H1 (cell line): ENCODE measurements at regions of chr10 and their contacts with region 1.

Region 1: GRCh38 chr10:69451209-69451783 is at the start of gene TSPAN15:
- DNase-seq: peak; percentile 88 to 91
- H3K4me3 ChIP-seq: peak within 1 kb of the TSS; percentile 56 to 91 (median 62)
- H3K27ac ChIP-seq: no peak within 1 kb of the TSS
- H3K4me1 ChIP-seq: peaks cover 0 to 10% (median 4%) of the 10 kb centered on the region in 4 experiments; a peak in 5 of 7 replicates
- H3K27me3 ChIP-seq: peaks cover 8 to 26% (median 16%) of the 10 kb centered on the region in 4 experiments
- CTCF ChIP-seq: no peak
- EP300 ChIP-seq: no peak
- POLR2A ChIP-seq: no peak
- RAD21 ChIP-seq: no peak
- total RNA-seq, gene TSPAN15: 9.7 and 11.6 TPM in 2 replicates

Region 2: DNA sequence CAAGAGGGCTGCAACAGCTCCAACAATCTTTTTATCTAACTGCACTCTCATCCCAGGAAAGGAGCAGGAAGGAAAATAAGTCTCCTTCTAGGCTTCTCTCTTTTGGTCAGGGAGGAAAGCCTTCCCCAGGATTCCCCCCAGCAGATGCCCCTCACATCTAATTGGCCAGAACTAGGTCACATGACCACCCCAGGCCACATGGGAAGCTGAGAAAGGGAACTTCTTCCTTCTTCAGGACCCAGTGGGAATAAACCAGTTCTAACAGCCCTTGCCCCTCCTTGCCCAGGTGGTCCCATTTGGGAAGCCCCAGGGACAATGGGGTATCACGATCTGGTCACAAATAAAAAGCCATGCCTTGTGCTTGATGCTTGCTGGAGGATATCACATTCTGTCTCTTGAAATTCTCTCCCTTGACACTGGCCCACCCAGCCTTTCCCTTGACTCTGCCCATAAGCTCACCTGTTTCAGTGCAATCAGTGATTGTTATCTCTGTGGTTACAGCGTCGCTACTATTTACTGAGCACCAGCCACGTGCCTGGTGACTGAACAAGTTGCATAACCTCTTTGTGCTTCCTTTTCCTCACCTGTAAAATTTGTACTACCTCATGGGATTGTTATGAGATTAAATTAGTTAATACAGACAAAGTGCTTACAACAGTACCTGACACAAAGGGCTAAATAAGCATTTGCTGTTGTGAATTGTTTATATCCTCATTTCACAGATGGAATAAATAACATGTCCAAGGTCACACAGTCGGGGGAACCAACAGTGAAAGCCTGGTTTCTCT is 25.6 kb before region 1 on chr10:
- CTCF ChIA-PET with region 1: interaction called, 150 read pairs
- POLR2A ChIA-PET with region 1: interaction called, 3 read pairs
- DNase-seq: no peak
- H3K4me3 ChIP-seq: no peak overlapping the region
- H3K27ac ChIP-seq: no peak overlapping the region
- H3K4me1 ChIP-seq: no peaks in the 10 kb centered on the region
- H3K27me3 ChIP-seq: no peaks in the 10 kb centered on the region
- CTCF ChIP-seq: no peak
- EP300 ChIP-seq: no peak
- POLR2A ChIP-seq: no peak
- RAD21 ChIP-seq: no peak

Region 3: GRCh38 chr10:69439813-69440506 is 11.3 kb before region 1 on chr10:
- CTCF ChIA-PET with region 1: interaction called, 150 read pairs
- POLR2A ChIA-PET with region 1: no interaction called
- DNase-seq: no peak
- H3K4me3 ChIP-seq: no peak overlapping the region
- H3K27ac ChIP-seq: no peak overlapping the region
- H3K4me1 ChIP-seq: no peaks in the 10 kb centered on the region
- H3K27me3 ChIP-seq: no peaks in the 10 kb centered on the region
- CTCF ChIP-seq: no peak
- EP300 ChIP-seq: no peak
- POLR2A ChIP-seq: no peak
- RAD21 ChIP-seq: no peak

Region 4: DNA sequence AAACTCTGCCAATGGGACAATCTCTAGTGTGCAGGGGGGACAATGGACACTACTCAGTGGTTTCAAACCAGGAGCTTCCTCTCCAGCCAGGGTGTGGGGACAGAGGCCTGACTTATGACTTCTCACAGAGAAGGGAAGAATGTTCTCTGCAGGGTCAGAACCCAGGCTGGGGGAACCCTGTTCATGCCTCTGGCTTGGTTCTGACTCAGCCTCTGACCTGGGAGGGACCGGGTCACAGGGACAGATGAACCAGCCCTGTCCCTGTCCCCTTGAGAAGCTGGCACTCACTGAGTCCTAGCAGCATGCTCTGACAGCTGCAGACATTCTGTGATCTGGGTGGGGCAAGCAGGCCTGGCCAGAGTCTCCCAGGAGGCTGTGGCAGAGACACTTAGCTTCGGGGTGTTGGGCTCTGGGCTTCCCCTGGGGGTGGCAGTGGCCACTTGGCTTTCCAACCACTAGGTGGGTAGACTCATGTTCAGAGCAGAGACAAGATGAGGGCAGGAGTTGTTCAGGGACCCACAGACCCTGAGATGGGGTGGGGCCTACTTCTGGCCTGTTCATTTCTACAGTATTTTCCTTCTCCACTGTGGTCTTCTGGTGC is 13.6 kb after region 1 on chr10:
- CTCF ChIA-PET with region 1: interaction called, 92 read pairs
- POLR2A ChIA-PET with region 1: interaction called, 3 read pairs
- DNase-seq: no peak
- H3K4me3 ChIP-seq: no peak overlapping the region
- H3K27ac ChIP-seq: no peak overlapping the region
- H3K4me1 ChIP-seq: peaks cover 0 to 5% (median 0%) of the 10 kb centered on the region in 4 experiments; a peak in 3 of 7 replicates
- H3K27me3 ChIP-seq: no peaks in the 10 kb centered on the region
- CTCF ChIP-seq: peak in 1 of 3 experiments; percentile 5; a peak in 1 of 4 replicates
- EP300 ChIP-seq: no peak
- POLR2A ChIP-seq: no peak
- RAD21 ChIP-seq: no peak

Region 5: DNA sequence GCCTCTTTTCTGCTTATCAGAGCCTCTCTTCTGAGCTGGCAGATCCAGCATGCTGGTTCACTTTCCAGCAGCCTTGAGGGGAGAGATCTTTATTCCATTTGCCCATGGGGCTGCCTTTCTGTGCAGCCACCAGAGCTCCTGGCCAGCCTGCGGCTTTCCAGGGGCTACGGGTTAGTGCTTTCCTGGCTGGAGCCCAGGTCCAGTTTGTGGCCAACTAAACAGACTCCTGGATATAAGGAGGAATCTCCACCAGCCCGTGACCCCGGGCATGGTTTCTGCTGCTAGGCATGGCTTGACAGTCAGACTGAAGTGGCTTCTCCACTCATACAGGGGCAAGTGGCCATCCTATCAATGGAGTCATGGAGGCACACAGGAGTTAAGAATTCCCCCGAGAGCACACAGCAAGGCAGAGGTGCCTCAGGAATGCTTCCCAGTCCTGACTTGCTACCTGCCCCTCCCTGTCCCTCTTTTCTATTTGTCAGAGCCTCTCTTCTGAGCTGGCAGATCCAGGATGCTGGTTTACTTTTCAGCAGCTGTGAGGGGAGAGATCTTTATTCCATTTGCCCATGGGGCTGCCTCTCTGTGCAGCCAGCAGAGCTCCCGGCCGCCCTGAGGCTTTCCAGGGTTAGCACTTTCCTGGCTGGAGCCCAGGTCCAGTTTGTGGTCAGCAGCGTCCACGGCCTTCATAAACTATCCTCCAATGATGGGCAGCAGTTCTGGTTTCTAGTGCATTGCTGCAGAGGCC is 35.8 kb after region 1 on chr10:
- CTCF ChIA-PET with region 1: interaction called, 36 read pairs
- POLR2A ChIA-PET with region 1: interaction called, 3 read pairs
- DNase-seq: no peak
- H3K4me3 ChIP-seq: no peak overlapping the region
- H3K27ac ChIP-seq: no peak overlapping the region
- H3K4me1 ChIP-seq: 0 out of 7 replicates have a peak, but pooled peaks cover 0 to under 1% (median 0%) of the 10 kb centered on the region in 4 experiments
- H3K27me3 ChIP-seq: no peaks in the 10 kb centered on the region
- CTCF ChIP-seq: no peak
- EP300 ChIP-seq: no peak
- POLR2A ChIP-seq: no peak
- RAD21 ChIP-seq: no peak

Region 6: GRCh38 chr10:69494626-69495558 is 43.6 kb after region 1 on chr10:
- CTCF ChIA-PET with region 1: interaction called, 52 read pairs
- POLR2A ChIA-PET with region 1: interaction called, 3 read pairs
- DNase-seq: no peak
- H3K4me3 ChIP-seq: no peak overlapping the region
- H3K27ac ChIP-seq: no peak overlapping the region; the same call in 1 of the 2 replicates
- H3K4me1 ChIP-seq: peaks cover 0 to 7% (median 1%) of the 10 kb centered on the region in 4 experiments; a peak in 1 of 7 replicates
- H3K27me3 ChIP-seq: no peaks in the 10 kb centered on the region
- CTCF ChIP-seq: no peak
- EP300 ChIP-seq: no peak
- POLR2A ChIP-seq: no peak
- RAD21 ChIP-seq: no peak

Region 7: DNA sequence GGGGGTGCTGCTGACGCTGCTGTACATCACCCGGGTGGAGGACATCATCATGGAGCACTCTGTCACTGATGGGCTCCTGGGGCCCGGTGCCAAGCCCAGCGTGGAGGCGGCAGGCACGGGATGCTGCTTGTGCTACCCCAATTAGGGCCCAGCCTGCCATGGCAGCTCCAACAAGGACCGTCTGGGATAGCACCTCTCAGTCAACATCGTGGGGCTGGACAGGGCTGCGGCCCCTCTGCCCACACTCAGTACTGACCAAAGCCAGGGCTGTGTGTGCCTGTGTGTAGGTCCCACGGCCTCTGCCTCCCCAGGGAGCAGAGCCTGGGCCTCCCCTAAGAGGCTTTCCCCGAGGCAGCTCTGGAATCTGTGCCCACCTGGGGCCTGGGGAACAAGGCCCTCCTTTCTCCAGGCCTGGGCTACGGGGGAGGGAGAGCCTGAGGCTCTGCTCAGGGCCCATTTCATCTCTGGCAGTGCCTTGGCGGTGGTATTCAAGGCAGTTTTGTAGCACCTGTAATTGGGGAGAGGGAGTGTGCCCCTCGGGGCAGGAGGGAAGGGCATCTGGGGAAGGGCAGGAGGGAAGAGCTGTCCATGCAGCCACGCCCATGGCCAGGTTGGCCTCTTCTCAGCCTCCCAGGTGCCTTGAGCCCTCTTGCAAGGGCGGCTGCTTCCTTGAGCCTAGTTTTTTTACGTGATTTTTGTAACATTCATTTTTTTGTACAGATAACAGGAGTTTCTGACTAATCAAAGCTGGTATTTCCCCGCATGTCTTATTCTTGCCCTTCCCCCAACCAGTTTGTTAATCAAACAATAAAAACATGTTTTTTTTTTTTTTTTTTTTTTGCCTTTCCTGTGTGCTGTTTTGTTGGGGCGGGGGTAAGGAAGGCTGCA is 55.8 kb after region 1 on chr10:
- CTCF ChIA-PET with region 1: interaction called, 74 read pairs
- POLR2A ChIA-PET with region 1: no interaction called
- DNase-seq: no peak
- H3K4me3 ChIP-seq: peak overlapping the region in 1 of 4 experiments; percentile 29; a peak in 1 of 8 replicates
- H3K27ac ChIP-seq: no peak overlapping the region
- H3K4me1 ChIP-seq: peaks cover 0 to 6% (median 5%) of the 10 kb centered on the region in 4 experiments; a peak in 5 of 7 replicates
- H3K27me3 ChIP-seq: no peaks in the 10 kb centered on the region
- CTCF ChIP-seq: no peak
- EP300 ChIP-seq: no peak
- POLR2A ChIP-seq: no peak
- RAD21 ChIP-seq: no peak